Activated CD4-positive, alpha-beta T cell treated with anti-CD3 and anti-CD28 coated beads, Interleukin-2, amount 10 ng/mL, durations not matched to agents 24 days and 14 days (primary cell): ENCODE measurements at regions of chr10 and their contacts with region 1.

Region 1: GRCh38 chr10:62637249-62638061 is 167.1 kb upstream of the ADO start:
- DNase-seq: peak; percentile 92
- H3K4me3 Mint-ChIP-seq: no peak overlapping the region
- H3K27ac Mint-ChIP-seq: no peak overlapping the region
- H3K4me1 Mint-ChIP-seq: peaks cover 22% of the 10 kb centered on the region
- H3K27me3 Mint-ChIP-seq: no peaks in the 10 kb centered on the region

Region 2: GRCh38 chr10:62528441-62528840 is 109.0 kb before region 1 on chr10:
- intact Hi-C with region 1: loop called (anchors 5 kb)
- DNase-seq: peak; percentile 65
- H3K4me3 Mint-ChIP-seq: peak overlapping the region; percentile 27
- H3K27ac Mint-ChIP-seq: peak overlapping the region; percentile 39
- H3K4me1 Mint-ChIP-seq: peaks cover 33% of the 10 kb centered on the region
- H3K27me3 Mint-ChIP-seq: peaks cover 11% of the 10 kb centered on the region

Region 3: DNA sequence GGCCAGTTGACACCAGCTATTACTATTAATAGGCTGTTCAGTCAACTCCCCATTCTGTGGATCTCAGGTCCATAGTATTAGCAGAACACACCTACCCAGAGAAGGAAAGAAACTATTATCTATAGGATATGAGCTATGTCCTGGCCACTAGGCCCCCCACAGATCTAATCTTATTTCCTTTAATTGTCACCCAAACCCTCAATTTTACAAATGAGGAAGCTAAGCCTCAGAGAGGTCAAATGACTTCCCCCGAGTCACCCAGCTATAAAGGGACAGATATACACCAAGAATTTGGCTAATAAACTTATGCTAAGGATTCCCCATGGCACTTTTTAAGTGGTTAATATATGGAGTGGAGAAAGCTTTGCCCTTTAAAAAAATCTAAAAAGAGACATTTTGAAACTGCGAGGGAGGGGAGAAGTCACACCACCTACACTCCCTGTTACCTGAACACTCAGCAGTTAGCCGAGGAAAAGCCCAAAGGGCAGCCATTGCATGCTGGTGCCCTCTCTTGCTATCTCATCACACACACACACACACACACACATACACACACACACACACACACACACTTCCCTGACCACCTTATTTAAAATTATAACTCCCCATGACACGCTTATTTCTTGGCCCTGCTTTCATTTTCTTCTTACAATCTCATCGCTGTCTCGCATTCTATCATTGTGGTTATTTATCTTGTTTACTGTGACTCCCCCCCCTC is 10.1 kb after region 1 on chr10:
- intact Hi-C with region 1: loop called (anchors 1 kb)
- DNase-seq: no peak
- H3K4me3 Mint-ChIP-seq: peak overlapping the region; percentile 17
- H3K27ac Mint-ChIP-seq: peak overlapping the region; percentile 38
- H3K4me1 Mint-ChIP-seq: peaks cover 48% of the 10 kb centered on the region
- H3K27me3 Mint-ChIP-seq: no peaks in the 10 kb centered on the region

Region 4: DNA sequence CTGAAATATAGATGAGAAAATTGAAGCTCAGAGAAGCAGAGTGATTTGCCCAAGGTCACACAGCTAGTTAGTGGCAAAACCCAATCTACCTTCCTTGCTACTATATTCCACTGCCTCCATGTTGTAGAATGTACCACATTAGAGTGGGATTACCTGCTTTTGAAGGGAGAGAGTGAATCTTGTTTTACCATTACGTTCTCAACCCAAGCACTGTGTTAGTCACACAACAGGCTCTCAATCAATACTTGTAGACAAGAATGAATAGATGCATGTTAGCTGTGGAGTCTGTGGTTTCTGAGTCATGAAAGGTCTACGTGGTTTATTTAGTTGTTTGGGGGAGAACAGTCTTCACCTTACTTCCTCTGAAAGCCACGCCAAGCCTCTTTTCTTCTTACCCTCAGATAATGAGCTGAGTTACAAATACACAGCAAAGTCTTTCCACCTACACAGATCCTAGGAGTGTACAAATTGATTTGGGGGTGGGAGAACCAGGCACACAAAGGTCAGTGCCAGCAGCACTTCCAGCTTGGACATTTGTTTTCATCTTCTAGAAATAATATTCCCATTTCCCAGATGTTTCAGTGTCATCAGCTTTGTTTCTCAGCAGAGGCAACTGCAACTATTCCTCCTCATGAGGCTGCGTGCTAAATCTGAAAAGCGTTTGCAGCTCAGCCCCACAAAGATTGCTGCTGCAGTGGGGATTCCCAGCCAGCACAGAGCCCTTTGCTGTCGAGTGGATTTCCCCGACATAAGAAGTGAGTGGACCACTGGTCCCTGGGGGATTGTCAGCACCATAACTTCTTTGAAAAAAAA is 95.6 kb after region 1 on chr10:
- intact Hi-C with region 1: loop called (anchors 1 kb)
- DNase-seq: peak; percentile 91
- H3K4me3 Mint-ChIP-seq: no peak overlapping the region
- H3K27ac Mint-ChIP-seq: no peak overlapping the region
- H3K4me1 Mint-ChIP-seq: peaks cover 43% of the 10 kb centered on the region
- H3K27me3 Mint-ChIP-seq: peaks cover 1% of the 10 kb centered on the region

Region 5: GRCh38 chr10:62811159-62811875 is 173.9 kb after region 1 on chr10:
- intact Hi-C with region 1: loop called (anchors 1 kb)
- DNase-seq: peak; percentile 90
- H3K4me3 Mint-ChIP-seq: peak overlapping the region; percentile 97
- H3K27ac Mint-ChIP-seq: peak overlapping the region; percentile 100
- H3K4me1 Mint-ChIP-seq: peaks cover 67% of the 10 kb centered on the region
- H3K27me3 Mint-ChIP-seq: peaks cover 1% of the 10 kb centered on the region

Region 6: GRCh38 chr10:62992145-62992721 is 354.8 kb after region 1 on chr10:
- intact Hi-C with region 1: loop called (anchors 10 kb)
- DNase-seq: no peak
- H3K4me3 Mint-ChIP-seq: peak overlapping the region; percentile 62
- H3K27ac Mint-ChIP-seq: peak overlapping the region; percentile 91
- H3K4me1 Mint-ChIP-seq: peaks cover 54% of the 10 kb centered on the region
- H3K27me3 Mint-ChIP-seq: no peaks in the 10 kb centered on the region